Ascending aorta (tissue), 2 donors: ENCODE measurements at regions of chr4 and their contacts with region 1.

Region 1: GRCh38 chr4:176034499-176034898 is 31.1 kb upstream of the WDR17 start:
- DNase-seq: no peak
- H3K4me3 ChIP-seq: no peak overlapping the region
- H3K27ac ChIP-seq: no peak overlapping the region
- H3K4me1 ChIP-seq: no peaks in the 10 kb centered on the region
- H3K27me3 ChIP-seq: no peaks in the 10 kb centered on the region
- CTCF ChIP-seq: peak; percentile 12 to 53 (median 35)

Region 2: GRCh38 chr4:176123710-176124407 is 89.4 kb after region 1 on chr4:
- intact Hi-C with region 1: loop called (anchors 5 kb)
- DNase-seq: no peak
- H3K4me3 ChIP-seq: no peak overlapping the region
- H3K27ac ChIP-seq: no peak overlapping the region
- H3K4me1 ChIP-seq: no peaks in the 10 kb centered on the region
- H3K27me3 ChIP-seq: no peaks in the 10 kb centered on the region
- CTCF ChIP-seq: peak in 2 of 3 experiments; percentile 34 to 39